ENCODE measurements at regions of chr4 and their contacts with region 1.

Region 1: GRCh38 chr4:1994935-1995334 is 13.8 kb downstream of the NELFA start:
- DNase-seq: no peak
- H3K4me3 Mint-ChIP-seq: no peak overlapping the region
- H3K27ac Mint-ChIP-seq: no peak overlapping the region
- H3K4me1 Mint-ChIP-seq: no peaks in the 10 kb centered on the region
- H3K27me3 Mint-ChIP-seq: no peaks in the 10 kb centered on the region

Region 2: GRCh38 chr4:1960170-1960825 is 34.6 kb before region 1 on chr4:
- CTCF ChIA-PET with region 1: no interaction called
- POLR2A ChIA-PET with region 1: no interaction called
- DNase-seq: no peak
- H3K4me3 Mint-ChIP-seq: no peak overlapping the region
- H3K27ac Mint-ChIP-seq: no peak overlapping the region
- H3K4me1 Mint-ChIP-seq: peaks cover 2% of the 10 kb centered on the region
- H3K27me3 Mint-ChIP-seq: no peaks in the 10 kb centered on the region

Region 3: GRCh38 chr4:2008875-2009703 is 14.2 kb after region 1 on chr4 and contains the start of gene NELFA:
- CTCF ChIA-PET with region 1: interaction called, 3 read pairs
- POLR2A ChIA-PET with region 1: interaction called, 10 read pairs
- DNase-seq: peak; percentile 94
- H3K4me3 Mint-ChIP-seq: peak within 1 kb of the TSS; percentile 89
- H3K27ac Mint-ChIP-seq: peak within 1 kb of the TSS; percentile 80
- H3K4me1 Mint-ChIP-seq: peaks cover 34% of the 10 kb centered on the region
- H3K27me3 Mint-ChIP-seq: peaks cover 6% of the 10 kb centered on the region
- total RNA-seq, gene NELFA: 34.2 to 36.0 TPM